ENCODE measurements at regions of chr3 and their contacts with region 1.

Region 1: DNA sequence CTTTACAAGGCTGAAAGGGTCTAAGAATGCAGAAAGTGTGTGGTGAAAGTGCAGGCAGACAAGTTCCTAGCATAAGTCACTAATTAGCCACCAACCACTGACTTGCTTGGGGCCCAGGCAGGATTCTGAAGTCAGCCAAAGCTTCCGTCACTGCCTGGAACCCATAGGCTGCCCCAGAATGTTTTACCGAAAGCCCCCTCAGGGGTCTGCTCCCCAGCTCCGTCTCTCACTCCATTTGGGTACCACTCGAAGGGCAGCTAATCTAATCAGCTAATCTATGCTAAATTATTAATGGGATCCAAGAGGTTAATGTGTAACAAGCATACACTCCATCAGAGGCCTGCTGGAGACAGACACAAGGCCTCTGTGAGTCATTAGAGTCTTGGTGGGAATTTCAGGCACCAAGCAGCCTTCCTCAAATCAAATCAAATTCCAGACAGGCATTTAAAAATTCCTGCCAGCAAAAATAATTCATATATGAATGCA is 13.2 kb downstream of the ADAMTS9 start:
- DNase-seq: no peak
- ATAC-seq: no peak

Region 2: DNA sequence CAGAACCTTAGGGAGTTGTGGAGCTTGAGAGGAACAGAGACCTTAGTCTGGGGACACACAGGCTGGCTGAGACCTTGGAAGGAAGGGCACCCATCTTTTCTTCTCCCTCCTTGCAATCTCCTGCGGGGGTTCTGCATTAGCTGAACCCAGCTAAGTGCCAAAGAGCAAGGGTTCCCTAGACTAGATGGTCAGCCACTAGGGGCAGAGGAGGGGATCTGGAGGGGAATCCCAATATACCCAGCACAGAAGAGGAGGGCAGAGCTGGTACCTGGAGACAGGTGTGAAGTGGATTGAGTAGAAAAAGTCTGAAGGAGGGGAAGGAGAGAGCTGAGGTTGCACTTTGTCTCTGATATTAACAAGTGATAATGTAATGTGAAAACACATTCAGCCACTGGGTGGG is 199.6 kb before region 1 on chr3:
- intact Hi-C with region 1: no loop called
- DNase-seq: no peak
- ATAC-seq: no peak

Region 3: DNA sequence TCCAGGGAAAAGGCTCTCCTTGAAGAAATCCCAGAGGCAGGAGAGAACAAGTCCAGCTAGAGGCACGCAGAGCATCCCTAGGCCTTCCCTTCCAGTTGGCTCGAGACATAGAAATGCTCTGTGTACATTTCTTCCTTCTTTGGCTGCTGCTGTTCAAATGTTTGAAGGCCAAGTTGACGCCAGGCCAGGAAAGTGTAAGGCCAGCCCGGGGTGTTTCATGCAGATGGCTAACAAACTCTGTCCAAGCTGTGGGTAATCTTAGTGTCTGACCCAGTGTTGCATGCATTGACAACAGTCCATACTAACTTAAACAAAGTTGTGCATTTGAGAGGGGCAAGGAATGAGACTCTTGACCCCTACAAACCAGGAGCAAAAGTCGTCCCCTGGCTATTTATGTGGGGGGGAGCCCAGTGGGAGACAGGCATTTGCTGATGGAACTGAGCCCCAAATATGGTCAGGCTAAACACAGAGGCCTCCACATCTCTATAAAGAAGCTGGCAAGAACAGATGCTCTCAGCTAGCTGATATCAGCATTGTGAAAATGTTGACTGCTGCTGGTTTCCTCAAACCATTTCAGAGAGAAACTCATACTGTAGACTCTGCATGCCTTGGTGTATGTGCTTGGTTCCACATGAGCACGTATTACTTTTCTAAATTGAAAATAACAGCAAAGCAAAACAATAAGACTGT is 126.3 kb before region 1 on chr3:
- intact Hi-C with region 1: loop called (anchors 5 kb)
- DNase-seq: no peak
- ATAC-seq: peak; percentile 90